HEK293 (cell line): ENCODE measurements at regions of chr17 and their contacts with region 1.

Region 1: GRCh38 chr17:45828628-45829027 is 16.1 kb upstream of the SPPL2C start:
- H3K4me3 ChIP-seq: no peak overlapping the region
- H3K27ac ChIP-seq: no peak overlapping the region
- H3K4me1 ChIP-seq: no peaks in the 10 kb centered on the region
- CTCF ChIP-seq: no peak

Region 2: DNA sequence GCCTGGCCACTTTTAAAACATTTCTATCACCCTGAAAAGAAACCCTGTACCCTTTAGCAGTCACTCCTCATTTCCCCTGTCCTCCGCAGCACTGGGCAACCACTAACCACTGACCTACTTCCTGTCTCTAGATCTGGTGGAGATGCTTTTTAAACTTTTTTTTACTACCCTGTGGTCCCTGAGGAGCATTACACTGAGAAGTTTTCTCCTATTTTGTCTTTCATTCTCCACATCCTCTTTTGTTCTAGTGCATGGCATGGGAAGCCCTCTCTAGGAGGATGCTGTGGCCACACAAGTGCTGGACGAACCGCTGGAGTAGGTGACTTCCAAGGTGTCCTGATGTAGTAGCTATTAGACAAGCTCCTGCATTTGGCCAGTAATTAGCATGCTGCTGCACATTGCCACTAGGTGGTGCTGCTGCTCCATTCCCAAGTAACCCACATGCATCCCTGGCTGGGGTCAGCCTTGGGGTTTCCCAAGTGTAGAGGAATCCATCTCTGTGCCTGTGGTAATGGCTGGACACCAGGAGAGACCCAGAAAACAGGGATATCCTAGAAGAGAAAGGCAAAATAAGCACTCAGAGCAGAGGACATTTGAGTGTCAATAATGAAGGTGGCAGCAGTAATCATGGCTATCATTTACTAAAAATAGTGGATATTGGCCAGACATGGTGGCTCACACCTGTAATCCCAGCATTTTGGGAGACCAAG is 188.3 kb before region 1 on chr17:
- CTCF ChIA-PET with region 1: interaction called, 99 read pairs
- POLR2A ChIA-PET with region 1: interaction called, 8 read pairs
- H3K4me3 ChIP-seq: no peak overlapping the region
- H3K27ac ChIP-seq: no peak overlapping the region
- H3K4me1 ChIP-seq: no peaks in the 10 kb centered on the region
- CTCF ChIP-seq: peak; percentile 89

Region 3: GRCh38 chr17:45648642-45649041 is 180.0 kb before region 1 on chr17:
- CTCF ChIA-PET with region 1: interaction called, 28 read pairs
- POLR2A ChIA-PET with region 1: no interaction called
- H3K4me3 ChIP-seq: no peak overlapping the region
- H3K27ac ChIP-seq: no peak overlapping the region
- H3K4me1 ChIP-seq: no peaks in the 10 kb centered on the region
- CTCF ChIP-seq: no peak

Region 4: GRCh38 chr17:45719335-45720071 is 109.1 kb before region 1 on chr17:
- CTCF ChIA-PET with region 1: interaction called, 12 read pairs
- POLR2A ChIA-PET with region 1: no interaction called
- H3K4me3 ChIP-seq: no peak overlapping the region
- H3K27ac ChIP-seq: no peak overlapping the region
- H3K4me1 ChIP-seq: peaks cover 2% of the 10 kb centered on the region; the same call in 1 of the 2 replicates
- CTCF ChIP-seq: peak; percentile 43; the same call in 1 of the 2 replicates

Region 5: GRCh38 chr17:45841883-45842525 is 13.4 kb after region 1 on chr17:
- CTCF ChIA-PET with region 1: interaction called, 12 read pairs
- POLR2A ChIA-PET with region 1: no interaction called
- H3K4me3 ChIP-seq: no peak overlapping the region
- H3K27ac ChIP-seq: no peak overlapping the region
- H3K4me1 ChIP-seq: no peaks in the 10 kb centered on the region
- CTCF ChIP-seq: no peak